ENCODE measurements at regions of chr4 and their contacts with region 1.

Region 1: DNA sequence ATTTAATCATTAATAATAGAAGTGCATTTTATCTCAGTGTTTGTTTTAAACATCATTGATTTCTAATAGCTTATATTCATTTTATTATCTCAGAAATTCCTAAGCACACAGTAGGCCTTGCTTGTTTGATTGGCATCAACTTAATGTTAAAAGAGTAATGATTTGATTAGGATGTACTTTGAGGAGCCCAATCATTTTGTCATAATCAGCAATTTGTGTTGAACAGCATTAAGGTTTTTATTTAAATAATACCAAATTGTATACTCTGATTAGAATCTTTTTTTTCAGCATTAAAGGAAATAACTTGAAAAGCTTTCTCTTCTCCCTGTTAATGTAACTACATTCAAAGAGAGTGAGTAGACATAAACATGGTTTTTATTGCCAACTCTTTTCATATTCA is 2262.0 kb upstream of the TENM3 start:
- DNase-seq: no peak
- ATAC-seq: no peak

Region 2: GRCh38 chr4:178745203-178745602 is 1236.0 kb before region 1 on chr4:
- intact Hi-C with region 1: loop called (anchors 5 kb)
- DNase-seq: no peak
- ATAC-seq: no peak